ENCODE measurements at regions of chr3 and their contacts with region 1.

Region 1: GRCh38 chr3:125332504-125332903 is 42.6 kb downstream of the ZNF148 start:
- DNase-seq: no peak
- CTCF ChIP-seq: no peak

Region 2: DNA sequence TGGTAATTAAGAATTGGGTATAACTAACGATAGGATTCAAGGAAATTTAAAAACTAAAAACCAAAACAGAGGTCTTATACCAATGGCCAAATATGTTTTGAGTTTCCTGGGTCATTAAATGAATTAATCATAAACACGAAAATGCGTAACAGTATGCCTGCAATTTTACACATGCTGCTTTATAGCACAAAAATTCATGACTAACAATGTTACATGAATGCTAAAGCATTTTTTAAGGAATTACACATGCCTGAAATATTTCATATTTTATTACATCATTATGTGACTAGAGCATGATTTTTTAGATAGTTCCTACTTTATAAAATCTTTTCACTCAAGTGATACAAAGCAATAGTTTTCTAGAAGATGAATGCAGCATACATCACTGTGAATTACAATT is 32.1 kb before region 1 on chr3:
- CTCF ChIA-PET with region 1: no interaction called
- POLR2A ChIA-PET with region 1: no interaction called
- DNase-seq: no peak
- CTCF ChIP-seq: no peak

Region 3: DNA sequence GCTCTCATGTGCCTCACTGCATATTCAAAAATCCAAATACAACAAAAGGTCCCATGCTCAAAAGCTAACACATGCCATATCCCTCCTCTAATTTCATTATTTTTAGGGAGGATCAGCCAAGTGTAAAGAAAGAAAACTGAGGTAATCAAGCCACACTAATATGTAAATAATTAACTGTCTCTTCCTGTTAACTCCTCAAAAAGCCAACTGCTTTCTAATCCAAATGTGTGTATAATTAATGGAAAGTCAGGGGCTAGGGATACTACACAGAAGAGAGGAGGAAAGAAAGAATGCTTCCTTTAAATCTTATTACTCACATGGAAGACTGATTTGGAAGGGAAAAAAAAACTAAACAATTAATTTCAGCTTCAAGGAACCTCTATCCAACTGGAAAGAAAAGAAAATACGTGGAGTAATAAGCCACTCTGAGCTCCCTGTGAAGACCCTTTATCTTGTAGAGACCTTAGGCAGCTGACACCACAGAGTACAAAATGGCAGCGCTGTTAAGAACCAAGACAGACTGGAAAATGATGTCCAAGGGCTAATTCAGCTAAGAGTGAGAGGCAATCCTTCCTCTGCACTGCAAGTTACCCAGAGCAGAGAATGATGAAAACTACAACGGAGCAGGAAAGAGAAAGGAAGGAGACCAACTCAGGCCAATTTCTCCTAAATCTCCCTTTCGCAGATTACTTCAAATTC is 14.2 kb before region 1 on chr3:
- CTCF ChIA-PET with region 1: interaction called, 12 read pairs
- POLR2A ChIA-PET with region 1: no interaction called
- DNase-seq: no peak
- CTCF ChIP-seq: no peak

Region 4: DNA sequence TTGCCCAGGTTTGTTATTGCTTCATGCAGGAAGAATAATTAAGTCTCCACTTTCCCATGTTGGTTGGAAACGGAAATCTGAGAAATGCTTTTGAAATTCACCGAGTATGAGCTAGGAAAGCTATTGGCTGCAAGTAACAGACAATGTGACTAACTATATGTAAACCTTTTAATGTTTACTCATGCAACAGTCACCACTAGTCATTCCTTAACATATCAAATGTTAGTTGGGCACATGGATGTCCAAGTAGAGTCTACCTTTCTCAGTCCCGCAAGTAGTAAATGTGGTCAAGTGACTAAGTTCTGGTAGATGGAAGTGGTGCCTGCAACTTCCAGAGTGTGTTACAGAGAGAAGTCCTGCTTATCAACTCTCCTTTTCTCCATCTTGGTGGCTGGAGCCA is 972.2 kb after region 1 on chr3:
- CTCF ChIA-PET with region 1: no interaction called
- POLR2A ChIA-PET with region 1: no interaction called
- DNase-seq: no peak
- CTCF ChIP-seq: no peak